ENCODE measurements at regions of chr2 and their contacts with region 1.

Region 1: GRCh38 chr2:9003616-9004337 is at the start of gene MBOAT2:
- DNase-seq: peak; percentile 86
- ATAC-seq: peak; percentile 63
- H3K4me3 ChIP-seq: peak within 1 kb of the TSS; percentile 91
- H3K27ac ChIP-seq: peak within 1 kb of the TSS; percentile 87
- H3K4me1 ChIP-seq: peaks cover 40% of the 10 kb centered on the region
- H3K27me3 ChIP-seq: no peaks in the 10 kb centered on the region
- CTCF ChIP-seq: no peak
- total RNA-seq, gene MBOAT2: 26.8 and 30.7 TPM in 2 replicates

Region 2: GRCh38 chr2:8872821-8873432 is 130.8 kb before region 1 on chr2:
- CTCF ChIA-PET with region 1: no interaction called
- POLR2A ChIA-PET with region 1: no interaction called
- intact Hi-C with region 1: loop called (anchors 5 kb)
- DNase-seq: peak; percentile 70
- ATAC-seq: 0 out of 2 replicates have a peak, but pooled peaks have one; percentile 40
- H3K4me3 ChIP-seq: no peak overlapping the region
- H3K27ac ChIP-seq: no peak overlapping the region
- H3K4me1 ChIP-seq: 0 out of 2 replicates have a peak, but pooled peaks cover 4% of the 10 kb centered on the region
- H3K27me3 ChIP-seq: no peaks in the 10 kb centered on the region
- CTCF ChIP-seq: peak; percentile 77

Region 3: DNA sequence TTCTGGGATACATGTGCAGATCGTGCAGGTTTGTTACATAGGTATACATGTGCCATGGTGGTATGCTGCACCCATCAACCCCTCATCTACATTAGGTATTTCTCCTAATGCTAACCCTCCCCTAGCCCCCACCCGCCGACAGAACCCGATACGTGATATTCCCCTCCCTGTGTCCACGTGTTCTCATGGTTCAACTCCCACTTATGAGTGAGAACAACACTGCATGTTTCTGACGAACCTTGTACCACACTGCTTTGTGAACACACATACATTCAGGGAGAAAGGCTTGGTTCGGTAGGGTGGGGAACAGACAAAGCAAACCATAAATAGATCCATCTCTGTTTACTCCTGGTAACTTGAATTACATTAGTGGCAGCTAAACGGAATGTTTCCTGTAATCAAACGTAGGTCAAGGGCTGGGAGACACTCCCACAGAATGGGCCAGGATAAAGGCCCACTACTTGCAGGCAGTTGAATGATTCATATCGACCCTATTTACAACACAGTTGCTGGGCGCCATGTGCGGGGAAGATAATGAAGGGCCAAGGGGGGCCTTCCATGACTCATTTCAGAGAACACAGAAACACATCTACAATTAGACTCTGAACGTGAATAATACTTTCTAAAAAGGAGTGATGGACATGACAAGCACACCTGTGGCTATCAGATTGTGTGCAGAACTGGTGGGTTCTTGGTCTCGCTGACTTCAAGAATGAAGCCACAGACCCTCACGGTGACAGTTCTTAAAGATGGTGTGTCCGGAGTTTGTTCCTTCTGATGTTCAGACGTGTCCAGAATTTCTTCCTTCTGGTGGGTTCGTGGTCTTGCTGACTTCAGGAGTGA is 109.6 kb before region 1 on chr2:
- CTCF ChIA-PET with region 1: no interaction called
- POLR2A ChIA-PET with region 1: no interaction called
- intact Hi-C with region 1: loop called (anchors 5 kb)
- DNase-seq: no peak
- ATAC-seq: no peak
- H3K4me3 ChIP-seq: no peak overlapping the region
- H3K27ac ChIP-seq: no peak overlapping the region
- H3K4me1 ChIP-seq: no peaks in the 10 kb centered on the region
- H3K27me3 ChIP-seq: no peaks in the 10 kb centered on the region
- CTCF ChIP-seq: no peak

Region 4: DNA sequence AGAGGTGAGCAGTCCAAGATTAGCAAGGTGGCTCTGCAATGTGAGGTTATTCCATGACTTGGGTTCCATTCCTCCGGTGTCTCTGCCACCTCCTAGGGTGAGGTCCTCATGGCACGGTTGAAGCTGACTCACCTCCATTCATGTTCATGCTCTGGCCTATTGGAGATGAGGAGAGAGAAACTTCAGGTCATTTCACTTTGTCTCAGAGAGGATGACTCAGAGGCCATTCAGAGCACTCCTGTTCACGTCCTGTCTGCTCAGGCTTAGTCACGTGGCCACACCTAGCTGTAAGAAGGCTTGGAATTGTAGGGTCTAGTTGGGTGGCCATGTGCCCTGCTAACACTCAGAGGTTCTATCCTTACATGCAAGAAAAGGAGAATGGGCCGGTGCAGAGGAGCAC is 67.3 kb after region 1 on chr2:
- CTCF ChIA-PET with region 1: interaction called, 5 read pairs
- POLR2A ChIA-PET with region 1: interaction called, 4 read pairs
- intact Hi-C with region 1: loop called (anchors 1 kb)
- DNase-seq: peak; percentile 99
- ATAC-seq: peak; percentile 94
- H3K4me3 ChIP-seq: no peak overlapping the region
- H3K27ac ChIP-seq: peak overlapping the region; percentile 92
- H3K4me1 ChIP-seq: peaks cover 32% of the 10 kb centered on the region
- H3K27me3 ChIP-seq: no peaks in the 10 kb centered on the region
- CTCF ChIP-seq: no peak

Region 5: DNA sequence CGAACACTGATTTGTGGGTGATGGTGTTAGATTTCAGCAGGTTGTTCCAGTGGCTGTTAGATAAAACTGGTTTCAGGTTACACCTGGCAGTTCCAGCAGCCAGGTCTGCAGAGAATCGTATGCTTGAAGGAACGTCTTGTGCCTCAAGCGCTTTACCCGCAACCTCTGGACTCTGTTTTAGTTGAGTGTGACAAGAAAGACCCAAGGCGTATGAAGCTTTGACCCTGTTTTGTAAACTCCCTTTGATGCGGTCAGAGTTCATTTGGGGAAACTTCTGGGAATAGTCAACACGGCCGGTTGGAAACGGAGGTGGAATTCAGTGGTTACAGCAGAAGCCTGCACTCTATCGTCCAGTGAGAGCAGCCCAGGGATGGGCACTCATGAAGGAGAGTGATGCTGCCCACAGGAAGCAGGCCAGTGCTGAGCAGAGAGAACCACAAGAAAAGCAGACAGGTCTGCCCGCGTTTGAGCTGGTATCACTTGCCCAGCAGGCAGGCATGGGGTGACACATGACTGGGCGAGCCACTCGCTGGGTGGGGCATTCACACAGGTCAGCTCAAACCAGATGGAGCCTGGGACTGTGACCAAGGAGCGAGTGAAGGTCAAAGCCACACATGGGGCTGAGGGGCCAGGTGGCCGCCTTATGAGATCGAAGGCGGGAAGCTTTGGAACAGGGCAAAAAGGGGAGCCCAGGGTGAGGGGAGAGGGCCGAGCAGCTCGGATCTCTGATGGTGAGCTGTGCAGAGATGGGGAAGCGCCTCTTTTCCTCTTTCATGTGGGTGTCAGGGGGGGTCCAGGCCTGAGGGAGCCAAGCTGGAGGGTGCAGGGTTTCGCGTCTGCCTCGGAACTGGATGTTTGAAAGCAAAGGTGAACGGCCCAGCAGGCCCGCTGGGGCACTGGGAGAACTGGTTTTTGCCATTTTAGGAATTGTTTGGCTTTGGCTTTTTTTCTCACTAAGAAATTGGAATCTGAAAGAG is 99.4 kb after region 1 on chr2:
- CTCF ChIA-PET with region 1: no interaction called
- POLR2A ChIA-PET with region 1: no interaction called
- intact Hi-C with region 1: loop called (anchors 2 kb)
- DNase-seq: peak; percentile 79
- ATAC-seq: peak; percentile 82
- H3K4me3 ChIP-seq: peak overlapping the region; percentile 26
- H3K27ac ChIP-seq: peak overlapping the region; percentile 99
- H3K4me1 ChIP-seq: peaks cover 49% of the 10 kb centered on the region
- H3K27me3 ChIP-seq: no peaks in the 10 kb centered on the region
- CTCF ChIP-seq: no peak; the same call in 1 of the 2 replicates

Region 6: DNA sequence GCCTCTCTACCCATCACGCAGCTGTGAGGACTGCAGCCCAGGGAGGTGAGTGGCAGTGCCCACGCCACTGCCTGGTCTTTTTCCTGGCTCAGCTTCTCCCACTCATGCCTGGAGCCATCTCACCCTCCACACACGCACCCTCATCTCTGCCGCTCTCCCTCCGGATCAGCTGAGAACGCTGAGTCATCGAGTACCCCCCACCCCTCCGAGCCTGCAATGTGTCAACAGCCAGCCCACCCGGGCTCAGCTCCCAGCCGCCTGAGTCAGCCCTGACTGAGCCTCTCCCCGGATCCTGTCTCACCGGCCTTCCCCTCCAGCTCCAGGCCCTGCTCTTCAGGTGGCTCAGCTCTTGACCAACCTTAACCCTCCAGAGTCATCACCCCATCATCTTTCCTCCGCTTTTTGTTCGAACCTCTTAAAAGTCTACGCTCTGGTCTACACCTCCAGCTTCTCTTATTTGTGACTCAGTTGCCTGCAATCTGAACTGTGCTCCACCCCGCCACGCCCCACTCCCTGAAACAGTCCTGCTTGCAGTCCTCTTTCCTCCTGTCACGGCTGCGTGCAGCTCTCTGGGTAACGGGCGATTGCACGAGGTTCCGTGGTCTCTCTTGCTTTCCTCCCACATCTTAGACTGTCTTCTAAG is 108.4 kb after region 1 on chr2:
- CTCF ChIA-PET with region 1: interaction called, 7 read pairs
- POLR2A ChIA-PET with region 1: interaction called, 8 read pairs
- intact Hi-C with region 1: loop called (anchors 2 kb)
- DNase-seq: peak; percentile 97
- ATAC-seq: peak; percentile 94
- H3K4me3 ChIP-seq: peak overlapping the region; percentile 14; the same call in 1 of the 2 replicates
- H3K27ac ChIP-seq: peak overlapping the region; percentile 94
- H3K4me1 ChIP-seq: peaks cover 48% of the 10 kb centered on the region
- H3K27me3 ChIP-seq: no peaks in the 10 kb centered on the region
- CTCF ChIP-seq: no peak

Region 7: GRCh38 chr2:10254373-10255151 is 1250.8 kb after region 1 on chr2:
- CTCF ChIA-PET with region 1: no interaction called
- POLR2A ChIA-PET with region 1: no interaction called
- intact Hi-C with region 1: no loop called
- DNase-seq: peak; percentile 81
- ATAC-seq: peak; percentile 91
- H3K4me3 ChIP-seq: no peak overlapping the region
- H3K27ac ChIP-seq: peak overlapping the region; percentile 27
- H3K4me1 ChIP-seq: peaks cover 26% of the 10 kb centered on the region
- H3K27me3 ChIP-seq: no peaks in the 10 kb centered on the region
- CTCF ChIP-seq: no peak

Region 8: GRCh38 chr2:10873790-10874437 is 1870.1 kb after region 1 on chr2:
- CTCF ChIA-PET with region 1: no interaction called
- POLR2A ChIA-PET with region 1: no interaction called
- intact Hi-C with region 1: no loop called
- DNase-seq: peak; percentile 48
- ATAC-seq: no peak
- H3K4me3 ChIP-seq: no peak overlapping the region
- H3K27ac ChIP-seq: no peak overlapping the region
- H3K4me1 ChIP-seq: peaks cover 20% of the 10 kb centered on the region
- H3K27me3 ChIP-seq: no peaks in the 10 kb centered on the region
- CTCF ChIP-seq: no peak

Measured in PC-3 (cell line).